Heart left ventricle (tissue), 16 donors: ENCODE measurements at regions of chr11 and their contacts with region 1.

Region 1: DNA sequence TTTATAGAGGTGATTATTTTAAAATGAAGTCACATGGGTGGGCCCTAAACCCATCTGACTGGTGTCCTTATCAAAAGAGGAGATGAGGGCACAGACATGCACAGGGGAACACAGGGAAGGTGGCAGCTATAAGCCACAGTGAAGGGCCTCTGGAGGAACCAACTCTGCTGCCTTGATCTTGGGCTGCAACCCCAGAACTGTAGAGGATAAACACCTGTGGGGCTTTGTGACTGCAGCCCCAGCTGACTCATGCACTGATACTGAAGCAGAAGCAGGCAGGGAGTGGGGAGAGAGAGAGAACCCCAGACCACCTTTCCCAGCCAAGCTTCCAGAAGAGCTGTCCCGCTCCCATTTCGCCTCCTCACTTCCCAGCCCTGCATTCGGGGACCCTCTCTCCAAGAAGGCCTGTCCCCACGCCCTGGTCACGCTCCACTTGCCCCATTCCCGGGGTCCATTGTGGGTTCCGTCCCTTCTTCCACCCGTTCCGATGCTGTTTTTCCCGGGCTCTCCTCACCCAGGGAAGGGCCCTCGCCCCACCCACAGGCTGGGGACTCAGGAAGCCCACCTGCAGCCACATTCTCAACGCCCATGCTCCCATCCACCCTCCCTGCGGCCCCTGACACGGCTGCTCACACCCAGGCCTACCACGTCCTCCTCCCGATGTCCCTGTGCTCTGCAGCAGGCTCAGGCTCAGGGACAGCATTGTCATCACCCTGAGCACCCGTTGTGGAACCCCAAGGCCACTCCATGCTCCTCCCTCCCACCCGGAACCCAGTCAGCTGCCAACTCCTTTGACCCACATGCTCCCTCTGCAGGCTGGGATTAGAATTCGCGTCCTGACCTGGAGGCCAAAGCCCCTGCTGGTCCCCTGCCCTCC is 90.8 kb upstream of the SHANK2 start:
- DNase-seq: no peak
- ATAC-seq: peak in 1 of 4 donors; percentile 24
- H3K4me3 ChIP-seq: no peak overlapping the region
- H3K27ac ChIP-seq: no peak overlapping the region
- H3K4me1 ChIP-seq: no peaks in the 10 kb centered on the region
- H3K27me3 ChIP-seq: peaks cover 0 to 59% (median 5%) of the 10 kb centered on the region in 9 donors
- CTCF ChIP-seq: peak in 5 of 12 donors; percentile 11 to 30 (median 14)
- POLR2A ChIP-seq: no peak

Region 2: GRCh38 chr11:71286701-71287643 is 56.2 kb before region 1 on chr11:
- intact Hi-C with region 1: loop called in 1 of 10 experiments (anchors 10 kb)
- DNase-seq: no peak
- ATAC-seq: peak in 1 of 4 donors; percentile 42
- H3K4me3 ChIP-seq: no peak overlapping the region
- H3K27ac ChIP-seq: no peak overlapping the region
- H3K4me1 ChIP-seq: no peaks in the 10 kb centered on the region
- H3K27me3 ChIP-seq: peaks cover 0 to 17% (median 0%) of the 10 kb centered on the region in 9 donors
- CTCF ChIP-seq: no peak
- POLR2A ChIP-seq: no peak

Region 3: DNA sequence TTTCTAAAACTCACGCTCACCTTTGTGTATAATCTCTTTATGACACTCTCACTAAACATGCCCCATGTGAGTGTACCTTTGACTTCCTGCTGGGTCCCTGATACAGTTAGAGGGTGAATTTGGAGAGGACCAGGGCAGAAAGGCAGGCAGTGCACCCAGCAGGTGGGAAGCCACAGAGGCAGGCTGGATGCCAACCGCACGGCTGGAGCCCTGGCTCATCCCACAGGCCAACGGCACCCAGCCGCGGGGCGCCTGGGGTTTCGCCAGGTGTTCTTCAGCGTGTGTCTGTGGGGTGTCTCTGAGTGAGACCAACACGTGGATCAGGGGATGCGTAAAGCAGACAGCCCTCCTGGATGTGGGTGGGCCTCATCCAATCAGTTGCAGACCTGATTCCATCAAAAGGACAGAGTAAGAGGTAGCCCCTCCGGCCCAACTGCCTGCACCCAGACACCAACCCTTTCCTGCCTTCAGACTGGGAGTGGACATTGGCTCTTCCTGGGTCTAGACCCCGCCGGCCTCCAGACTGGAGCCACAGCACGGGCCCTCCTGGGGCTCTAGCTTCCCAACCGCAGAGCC is 53.4 kb after region 1 on chr11:
- intact Hi-C with region 1: no loop called
- DNase-seq: no peak
- ATAC-seq: no peak
- H3K4me3 ChIP-seq: no peak overlapping the region
- H3K27ac ChIP-seq: no peak overlapping the region
- H3K4me1 ChIP-seq: no peaks in the 10 kb centered on the region
- H3K27me3 ChIP-seq: peaks cover 0 to 50% (median 7%) of the 10 kb centered on the region in 9 donors
- CTCF ChIP-seq: no peak
- POLR2A ChIP-seq: no peak